ENCODE measurements at regions of chrX and their contacts with region 1.

Region 1: GRCh38 chrX:53190363-53190960 is 34.5 kb downstream of the KDM5C start:
- DNase-seq: peak in 1 of 2 experiments; percentile 30
- H3K4me3 ChIP-seq: no peak overlapping the region
- H3K4me3 Mint-ChIP-seq: no peak overlapping the region
- H3K27ac Mint-ChIP-seq: no peak overlapping the region
- H3K4me1 ChIP-seq: no peaks in the 10 kb centered on the region
- H3K4me1 Mint-ChIP-seq: no peaks in the 10 kb centered on the region
- H3K27me3 ChIP-seq: no peaks in the 10 kb centered on the region
- H3K27me3 Mint-ChIP-seq: no peaks in the 10 kb centered on the region
- CTCF ChIP-seq: peak in 1 of 2 experiments; percentile 26

Region 2: DNA sequence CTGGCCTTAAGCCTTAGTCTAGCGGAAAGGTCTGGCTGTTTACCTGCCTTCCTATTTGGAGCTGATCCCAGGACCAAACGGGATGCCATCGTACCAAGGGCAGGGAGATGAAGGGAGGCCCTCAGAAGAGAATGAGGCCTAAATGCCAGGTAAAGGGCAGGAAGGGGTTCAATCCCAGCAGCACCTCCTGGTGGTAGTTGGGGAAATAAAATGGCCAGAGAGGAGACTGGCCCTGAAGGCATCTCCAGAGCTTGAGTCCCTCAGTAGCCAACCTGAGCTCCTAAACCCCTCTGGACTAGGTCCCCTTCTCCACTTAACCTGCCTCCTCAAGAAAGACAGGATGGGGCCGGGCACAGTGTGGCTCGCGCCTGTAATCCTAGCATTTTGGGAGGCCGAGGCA is 19.1 kb before region 1 on chrX:
- CTCF ChIA-PET with region 1: no interaction called
- POLR2A ChIA-PET with region 1: interaction called, 12 read pairs
- intact Hi-C with region 1: no loop called
- DNase-seq: no peak
- H3K4me3 ChIP-seq: no peak overlapping the region
- H3K4me3 Mint-ChIP-seq: no peak overlapping the region
- H3K27ac Mint-ChIP-seq: no peak overlapping the region
- H3K4me1 ChIP-seq: no peaks in the 10 kb centered on the region
- H3K4me1 Mint-ChIP-seq: no peaks in the 10 kb centered on the region
- H3K27me3 ChIP-seq: no peaks in the 10 kb centered on the region
- H3K27me3 Mint-ChIP-seq: no peaks in the 10 kb centered on the region
- CTCF ChIP-seq: no peak

Region 3: DNA sequence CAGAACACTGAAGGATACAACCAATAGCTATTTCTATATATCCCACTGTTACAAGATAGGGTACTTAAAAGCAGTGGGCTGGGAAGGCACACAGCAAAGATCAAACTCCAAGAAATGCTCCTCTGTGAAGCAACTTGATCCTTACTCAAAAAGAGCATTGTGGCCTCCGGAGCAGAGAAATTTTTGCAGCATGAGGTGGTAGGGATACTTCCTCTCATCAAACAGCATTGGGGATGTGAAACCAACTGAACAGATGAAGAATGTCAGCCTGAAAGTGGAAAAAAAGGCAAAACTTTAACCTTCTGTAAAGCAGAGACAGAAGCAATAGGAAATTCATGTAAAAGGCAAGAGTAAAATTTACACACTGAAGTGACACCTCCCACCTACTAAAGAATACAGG is 403.9 kb after region 1 on chrX:
- CTCF ChIA-PET with region 1: no interaction called
- POLR2A ChIA-PET with region 1: no interaction called
- intact Hi-C with region 1: no loop called
- DNase-seq: no peak
- H3K4me3 ChIP-seq: no peak overlapping the region
- H3K4me3 Mint-ChIP-seq: no peak overlapping the region
- H3K27ac Mint-ChIP-seq: no peak overlapping the region
- H3K4me1 ChIP-seq: no peaks in the 10 kb centered on the region
- H3K4me1 Mint-ChIP-seq: no peaks in the 10 kb centered on the region
- H3K27me3 ChIP-seq: no peaks in the 10 kb centered on the region
- H3K27me3 Mint-ChIP-seq: peaks cover 3% of the 10 kb centered on the region
- CTCF ChIP-seq: no peak

Measured in Caco-2 (cell line).